Left ventricle myocardium inferior (tissue), 1 donor: ENCODE measurements at regions of chr20 and their contacts with region 1.

Region 1: DNA sequence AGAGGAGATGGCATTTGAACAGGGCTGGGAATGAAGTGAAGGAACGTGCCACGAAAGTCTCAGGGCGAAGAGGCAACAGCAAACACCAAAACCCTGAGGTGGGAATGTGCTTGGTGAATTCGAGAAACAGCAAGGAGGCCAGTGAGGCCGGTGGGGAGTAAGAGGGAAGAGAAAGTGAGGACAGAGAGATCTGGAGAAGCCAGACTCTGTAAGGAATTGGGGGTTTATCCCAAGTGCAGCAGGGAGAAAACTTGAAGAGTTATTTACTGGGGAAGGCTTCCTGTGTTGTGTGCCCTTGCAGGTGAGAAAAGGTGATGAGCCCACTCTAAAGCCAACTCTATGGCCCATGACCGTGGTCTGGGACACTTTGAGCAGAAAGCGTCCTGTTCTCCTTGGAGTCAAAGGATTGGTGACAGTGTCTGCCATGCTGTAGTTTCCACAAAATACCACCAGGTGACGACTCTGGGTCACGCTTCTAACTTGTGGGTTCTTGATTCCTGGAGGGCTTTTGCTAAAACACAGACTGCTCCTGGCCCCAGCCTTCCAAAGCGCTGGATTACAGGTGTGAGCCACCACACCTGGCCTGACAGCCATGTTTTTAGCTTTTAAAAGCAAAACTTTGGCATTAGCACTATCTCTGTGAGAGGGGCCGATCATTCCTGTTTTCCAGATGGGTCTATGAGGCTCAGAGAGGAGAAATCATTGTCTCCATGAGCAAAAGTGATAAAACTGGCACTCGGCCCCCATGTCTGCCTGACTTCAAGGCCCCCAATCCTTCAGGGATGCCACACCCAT is 18.0 kb upstream of the CSNK2A1 start:
- DNase-seq: peak; percentile 56
- H3K4me3 ChIP-seq: no peak overlapping the region
- H3K27ac ChIP-seq: no peak overlapping the region
- H3K4me1 ChIP-seq: peaks cover 28% of the 10 kb centered on the region
- H3K27me3 ChIP-seq: no peaks in the 10 kb centered on the region
- CTCF ChIP-seq: peak; percentile 100

Region 2: DNA sequence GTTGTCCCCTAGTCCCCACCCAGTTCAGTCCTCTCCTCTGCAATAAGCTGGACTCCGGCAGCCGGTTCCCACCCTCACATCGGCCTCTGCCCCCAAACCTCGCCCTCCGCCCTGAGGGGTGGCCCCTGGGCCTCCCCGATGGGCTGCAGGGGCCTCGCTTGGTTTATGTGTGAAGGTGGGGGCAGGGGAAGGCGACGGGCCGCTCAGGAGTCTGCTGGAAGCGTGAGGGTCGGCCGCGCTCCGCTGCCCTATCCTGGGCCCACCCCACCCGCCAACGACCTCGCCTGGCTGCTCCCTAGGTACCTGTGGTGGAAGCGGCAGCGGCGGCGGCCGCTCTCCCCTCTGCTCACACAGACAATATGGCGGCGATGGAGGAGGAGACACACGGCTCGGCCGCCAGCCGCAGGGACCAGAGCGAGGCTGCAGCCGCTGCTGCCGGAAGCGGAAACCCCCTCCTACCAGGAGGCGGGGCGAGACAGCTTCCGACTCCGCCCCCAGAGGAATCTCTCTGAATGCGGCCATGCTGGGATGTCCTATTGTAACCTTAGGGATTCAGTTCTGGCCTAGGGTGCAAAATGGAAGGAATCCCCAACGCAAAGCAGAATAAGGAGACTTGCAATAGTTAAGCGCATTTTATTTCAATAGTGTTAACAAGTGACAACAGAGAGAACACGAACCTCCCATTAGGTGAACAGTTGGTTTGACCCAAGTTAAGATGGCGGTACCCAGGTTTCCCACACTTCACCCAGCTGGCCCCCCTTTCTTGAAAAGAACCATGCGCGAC is 18.1 kb before region 1 on chr20 and contains the start of gene CSNK2A1:
- intact Hi-C with region 1: no loop called
- DNase-seq: peak; percentile 93
- H3K4me3 ChIP-seq: peak within 1 kb of the TSS; percentile 85
- H3K27ac ChIP-seq: peak within 1 kb of the TSS; percentile 92
- H3K4me1 ChIP-seq: peaks cover 59% of the 10 kb centered on the region
- H3K27me3 ChIP-seq: no peaks in the 10 kb centered on the region
- CTCF ChIP-seq: no peak
- total RNA-seq, gene CSNK2A1: 122 TPM

Region 3: GRCh38 chr20:610130-611046 is 48.8 kb after region 1 on chr20 and contains the start of gene TCF15:
- intact Hi-C with region 1: loop called (anchors 5 kb)
- DNase-seq: peak; percentile 71
- H3K4me3 ChIP-seq: peak within 1 kb of the TSS; percentile 80
- H3K27ac ChIP-seq: peak within 1 kb of the TSS; percentile 94
- H3K4me1 ChIP-seq: peaks cover 64% of the 10 kb centered on the region
- H3K27me3 ChIP-seq: peaks cover 21% of the 10 kb centered on the region
- CTCF ChIP-seq: no peak
- total RNA-seq, gene TCF15: 11.1 TPM

Region 4: GRCh38 chr20:645318-646106 is 83.9 kb after region 1 on chr20:
- intact Hi-C with region 1: loop called (anchors 2 kb)
- DNase-seq: peak; percentile 71
- H3K4me3 ChIP-seq: no peak overlapping the region
- H3K27ac ChIP-seq: peak overlapping the region; percentile 66
- H3K4me1 ChIP-seq: peaks cover 42% of the 10 kb centered on the region
- H3K27me3 ChIP-seq: no peaks in the 10 kb centered on the region
- CTCF ChIP-seq: no peak

Region 5: DNA sequence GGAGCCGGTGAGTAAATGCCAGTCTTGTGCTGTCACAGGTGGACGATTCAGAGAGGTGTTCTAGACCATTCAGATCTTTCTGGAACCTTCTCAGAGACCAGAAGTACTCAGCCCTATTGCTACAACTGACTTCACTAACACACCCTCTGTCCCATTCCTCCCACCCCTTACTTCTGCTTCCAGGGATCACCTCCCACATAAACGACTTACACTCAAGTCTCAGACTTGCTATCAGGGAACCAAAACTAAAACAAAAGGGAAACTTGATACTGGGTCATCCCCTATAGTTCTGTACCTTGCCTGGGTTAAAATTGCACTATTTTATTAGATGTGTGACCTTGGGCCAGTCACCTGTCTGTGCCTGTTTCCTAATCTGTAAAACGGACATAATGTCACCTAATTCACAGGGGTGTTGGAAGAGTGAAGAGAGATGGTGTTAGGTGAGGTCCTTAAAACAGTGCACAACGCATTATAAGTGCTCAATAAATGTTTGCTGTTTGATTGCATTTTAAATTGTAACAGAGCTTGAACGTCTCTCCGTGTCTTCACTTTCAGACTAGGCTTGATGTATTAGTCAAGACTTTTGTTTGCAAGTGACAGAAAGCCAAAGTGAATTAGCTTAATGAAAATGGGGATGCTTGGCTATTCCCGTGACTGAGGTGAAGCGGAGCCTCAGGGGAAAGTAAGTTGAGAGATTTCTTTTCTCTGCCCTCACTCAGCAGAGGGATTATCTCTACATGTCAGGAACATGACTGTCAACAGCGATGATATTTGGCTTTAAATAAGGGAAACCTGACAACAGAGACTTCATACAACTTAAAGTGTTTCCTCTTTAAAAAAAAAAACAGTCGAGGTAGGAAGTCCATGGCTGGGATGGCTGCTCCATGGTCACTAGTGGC is 94.3 kb after region 1 on chr20:
- intact Hi-C with region 1: no loop called
- DNase-seq: no peak
- H3K4me3 ChIP-seq: no peak overlapping the region
- H3K27ac ChIP-seq: no peak overlapping the region
- H3K4me1 ChIP-seq: peaks cover 34% of the 10 kb centered on the region
- H3K27me3 ChIP-seq: peaks cover 20% of the 10 kb centered on the region
- CTCF ChIP-seq: no peak

Region 6: DNA sequence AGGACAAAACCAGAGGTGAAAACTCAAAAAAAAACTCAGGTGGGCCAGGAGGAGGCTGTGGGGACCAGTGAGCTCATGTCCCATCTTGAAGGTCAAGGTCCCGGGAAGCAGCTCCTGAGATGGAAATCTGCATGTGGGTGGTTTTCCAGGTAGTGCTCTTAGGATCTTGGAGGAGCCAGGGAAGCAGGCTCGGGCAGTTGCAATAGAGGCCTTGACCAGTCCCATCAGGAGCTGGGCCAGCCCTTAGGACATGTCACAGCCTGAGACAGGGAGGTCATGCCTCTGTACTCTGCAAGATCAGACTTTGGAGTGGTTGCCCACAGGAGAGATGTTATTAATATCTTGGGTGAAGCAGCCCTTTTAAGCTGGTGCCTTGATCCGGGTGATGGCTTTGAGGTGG is 175.3 kb after region 1 on chr20:
- intact Hi-C with region 1: loop called (anchors 5 kb)
- DNase-seq: no peak
- H3K4me3 ChIP-seq: no peak overlapping the region
- H3K27ac ChIP-seq: no peak overlapping the region
- H3K4me1 ChIP-seq: peaks cover 4% of the 10 kb centered on the region
- H3K27me3 ChIP-seq: peaks cover 2% of the 10 kb centered on the region
- CTCF ChIP-seq: no peak

Region 7: DNA sequence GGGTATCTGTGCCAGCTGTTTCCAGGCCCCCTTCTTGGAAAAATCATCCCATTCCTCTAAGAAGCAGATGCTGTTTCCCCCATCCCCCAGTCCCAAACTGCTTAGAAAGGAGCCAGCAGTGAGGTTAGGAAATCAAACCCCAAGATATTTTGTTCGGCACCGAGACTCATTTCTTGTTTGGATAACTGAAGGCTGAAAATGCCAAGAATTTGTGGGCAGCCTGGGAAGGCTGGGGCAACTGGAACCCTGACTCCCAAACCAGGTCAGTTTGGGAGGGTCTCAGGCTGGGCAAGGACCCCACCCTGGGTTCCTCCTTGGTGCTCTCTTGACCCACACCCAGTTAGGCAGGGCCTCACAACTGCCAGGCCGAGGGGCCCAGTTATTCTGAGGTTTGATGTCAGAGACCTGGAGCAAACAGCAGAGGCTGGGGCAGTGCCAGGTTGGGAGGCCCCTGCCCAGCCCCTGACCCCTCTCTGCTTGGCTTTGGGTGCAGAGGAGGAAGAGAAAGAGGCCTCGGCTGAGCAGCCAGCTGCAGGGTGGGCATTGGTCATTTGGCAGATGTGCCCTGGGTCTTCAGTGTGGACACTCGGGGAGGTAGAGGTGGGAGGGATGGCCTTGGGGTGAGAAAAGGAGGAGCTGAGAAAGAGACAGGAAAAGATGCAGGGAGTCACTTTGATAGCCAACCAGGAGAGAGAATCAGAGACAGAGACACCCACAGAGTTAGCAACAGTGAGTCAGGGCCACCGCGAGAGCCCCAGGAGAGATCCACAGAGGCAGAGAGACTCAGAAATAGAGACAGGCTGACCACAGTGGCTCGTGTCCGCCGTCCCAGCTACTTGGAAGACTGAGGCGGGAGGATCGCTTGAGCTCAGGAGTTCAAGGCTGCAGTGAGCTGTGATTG is 349.5 kb after region 1 on chr20:
- intact Hi-C with region 1: no loop called
- DNase-seq: no peak
- H3K4me3 ChIP-seq: no peak overlapping the region
- H3K27ac ChIP-seq: peak overlapping the region; percentile 47
- H3K4me1 ChIP-seq: peaks cover 11% of the 10 kb centered on the region
- H3K27me3 ChIP-seq: peaks cover 61% of the 10 kb centered on the region
- CTCF ChIP-seq: no peak